Caco-2 (cell line): ENCODE measurements at regions of chr19 and their contacts with region 1.

Region 1: DNA sequence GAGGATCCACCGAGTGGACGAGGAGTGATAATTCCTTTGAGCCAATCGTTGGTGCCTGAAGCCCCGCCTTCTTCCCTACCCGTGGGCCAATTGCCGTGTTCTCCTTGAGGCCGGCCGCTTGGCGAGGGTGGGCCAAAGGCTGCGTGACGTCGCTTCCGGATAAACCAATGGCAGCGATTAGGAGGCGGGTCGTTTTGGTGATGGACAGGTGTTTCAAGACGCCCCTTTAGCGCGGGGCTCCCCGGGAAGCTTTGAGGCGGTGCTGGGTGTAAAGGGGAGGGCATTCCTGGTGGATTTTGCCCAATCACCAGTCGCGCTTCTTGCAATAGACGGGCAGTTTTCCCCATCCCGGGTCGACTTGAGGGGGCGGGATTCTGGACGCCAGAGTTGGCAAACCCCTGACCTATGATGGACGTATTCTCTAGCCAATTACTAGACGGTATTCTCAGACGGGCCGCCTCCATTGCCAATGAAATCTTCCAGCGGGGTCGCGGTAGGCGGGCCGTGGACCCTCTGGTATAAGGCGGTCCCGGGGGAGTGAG is 310 bp upstream of the PRMT1 start:
- DNase-seq: peak; percentile 100
- H3K4me3 ChIP-seq: peak overlapping the region; percentile 100
- H3K4me3 Mint-ChIP-seq: peak overlapping the region; percentile 78
- H3K27ac Mint-ChIP-seq: peak overlapping the region; percentile 99
- H3K4me1 ChIP-seq: peaks cover 22% of the 10 kb centered on the region
- H3K4me1 Mint-ChIP-seq: peaks cover 19% of the 10 kb centered on the region
- H3K27me3 ChIP-seq: no peaks in the 10 kb centered on the region
- H3K27me3 Mint-ChIP-seq: no peaks in the 10 kb centered on the region
- CTCF ChIP-seq: no peak

Region 2: GRCh38 chr19:49546825-49547565 is 129.8 kb before region 1 on chr19:
- CTCF ChIA-PET with region 1: interaction called, 7 read pairs
- POLR2A ChIA-PET with region 1: interaction called, 13 read pairs
- intact Hi-C with region 1: no loop called
- DNase-seq: peak; percentile 88 to 89
- H3K4me3 ChIP-seq: no peak overlapping the region
- H3K4me3 Mint-ChIP-seq: peak overlapping the region; percentile 54
- H3K27ac Mint-ChIP-seq: peak overlapping the region; percentile 44
- H3K4me1 ChIP-seq: peaks cover 3% of the 10 kb centered on the region; the same call in 1 of the 2 replicates
- H3K4me1 Mint-ChIP-seq: peaks cover 21% of the 10 kb centered on the region
- H3K27me3 ChIP-seq: no peaks in the 10 kb centered on the region
- H3K27me3 Mint-ChIP-seq: no peaks in the 10 kb centered on the region
- CTCF ChIP-seq: peak; percentile 84 to 86

Region 3: GRCh38 chr19:49590071-49590970 is 86.4 kb before region 1 on chr19:
- CTCF ChIA-PET with region 1: interaction called, 3 read pairs
- POLR2A ChIA-PET with region 1: interaction called, 3 read pairs
- intact Hi-C with region 1: loop called (anchors 1 kb)
- DNase-seq: peak; percentile 99
- H3K4me3 ChIP-seq: peak overlapping the region; percentile 99
- H3K4me3 Mint-ChIP-seq: peak overlapping the region; percentile 74
- H3K27ac Mint-ChIP-seq: peak overlapping the region; percentile 82
- H3K4me1 ChIP-seq: peaks cover 10% of the 10 kb centered on the region
- H3K4me1 Mint-ChIP-seq: peaks cover 29% of the 10 kb centered on the region
- H3K27me3 ChIP-seq: no peaks in the 10 kb centered on the region
- H3K27me3 Mint-ChIP-seq: no peaks in the 10 kb centered on the region
- CTCF ChIP-seq: no peak

Region 4: DNA sequence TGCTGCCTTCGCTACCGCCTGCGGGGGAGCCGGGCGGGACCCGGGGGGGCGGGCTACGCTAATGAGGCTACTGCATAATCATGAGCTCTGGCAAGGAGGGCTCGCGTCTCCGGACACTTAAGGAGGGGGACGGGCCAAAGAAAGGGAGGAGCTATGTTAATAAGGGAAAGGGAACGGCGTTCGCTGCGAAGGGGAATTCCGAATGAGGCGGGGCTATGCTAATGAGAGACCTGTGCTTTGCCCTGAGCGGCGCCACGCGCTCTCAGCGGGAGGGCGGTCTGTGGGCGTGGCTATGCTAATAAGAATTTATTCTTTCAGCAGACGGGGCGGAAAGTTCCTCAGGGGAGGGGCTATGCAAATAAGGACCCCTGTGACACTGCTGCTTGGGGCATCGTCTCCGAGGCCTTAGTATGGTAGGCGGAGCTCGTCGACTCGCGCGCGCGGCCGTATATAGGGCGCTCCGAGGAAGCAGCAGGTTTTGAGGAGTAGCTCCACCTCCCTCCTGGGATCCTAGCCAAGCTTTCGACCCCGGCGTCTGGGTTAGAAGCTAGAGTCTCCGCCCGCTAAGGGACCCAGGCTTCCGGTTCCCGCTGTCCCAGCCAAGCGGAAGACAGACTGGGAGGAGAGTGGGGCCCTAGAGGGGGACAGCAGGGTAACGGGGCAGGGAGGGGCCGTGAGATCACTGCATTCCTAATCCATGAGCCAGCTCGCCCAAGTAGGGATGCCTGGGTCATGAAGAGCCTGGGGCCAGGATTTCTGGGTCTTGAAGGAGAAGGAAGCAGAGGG is 36.5 kb before region 1 on chr19 and contains the start of gene RRAS:
- CTCF ChIA-PET with region 1: interaction called, 11 read pairs
- POLR2A ChIA-PET with region 1: interaction called, 50 read pairs
- intact Hi-C with region 1: loop called (anchors 1 kb)
- DNase-seq: peak; percentile 100
- H3K4me3 ChIP-seq: peak within 1 kb of the TSS; percentile 59
- H3K4me3 Mint-ChIP-seq: peak within 1 kb of the TSS; percentile 91
- H3K27ac Mint-ChIP-seq: peak within 1 kb of the TSS; percentile 100
- H3K4me1 ChIP-seq: peaks cover 7% of the 10 kb centered on the region
- H3K4me1 Mint-ChIP-seq: peaks cover 43% of the 10 kb centered on the region
- H3K27me3 ChIP-seq: no peaks in the 10 kb centered on the region
- H3K27me3 Mint-ChIP-seq: no peaks in the 10 kb centered on the region
- CTCF ChIP-seq: no peak
- total RNA-seq, gene RRAS: 10.6 and 11.3 TPM in 2 replicates

Region 5: GRCh38 chr19:49705919-49706318 is 29.2 kb after region 1 on chr19:
- CTCF ChIA-PET with region 1: no interaction called
- POLR2A ChIA-PET with region 1: no interaction called
- intact Hi-C with region 1: no loop called
- DNase-seq: no peak
- H3K4me3 ChIP-seq: no peak overlapping the region
- H3K4me3 Mint-ChIP-seq: no peak overlapping the region
- H3K27ac Mint-ChIP-seq: no peak overlapping the region
- H3K4me1 ChIP-seq: no peaks in the 10 kb centered on the region
- H3K4me1 Mint-ChIP-seq: peaks cover 6% of the 10 kb centered on the region
- H3K27me3 ChIP-seq: no peaks in the 10 kb centered on the region
- H3K27me3 Mint-ChIP-seq: peaks cover 3% of the 10 kb centered on the region
- CTCF ChIP-seq: no peak

Region 6: DNA sequence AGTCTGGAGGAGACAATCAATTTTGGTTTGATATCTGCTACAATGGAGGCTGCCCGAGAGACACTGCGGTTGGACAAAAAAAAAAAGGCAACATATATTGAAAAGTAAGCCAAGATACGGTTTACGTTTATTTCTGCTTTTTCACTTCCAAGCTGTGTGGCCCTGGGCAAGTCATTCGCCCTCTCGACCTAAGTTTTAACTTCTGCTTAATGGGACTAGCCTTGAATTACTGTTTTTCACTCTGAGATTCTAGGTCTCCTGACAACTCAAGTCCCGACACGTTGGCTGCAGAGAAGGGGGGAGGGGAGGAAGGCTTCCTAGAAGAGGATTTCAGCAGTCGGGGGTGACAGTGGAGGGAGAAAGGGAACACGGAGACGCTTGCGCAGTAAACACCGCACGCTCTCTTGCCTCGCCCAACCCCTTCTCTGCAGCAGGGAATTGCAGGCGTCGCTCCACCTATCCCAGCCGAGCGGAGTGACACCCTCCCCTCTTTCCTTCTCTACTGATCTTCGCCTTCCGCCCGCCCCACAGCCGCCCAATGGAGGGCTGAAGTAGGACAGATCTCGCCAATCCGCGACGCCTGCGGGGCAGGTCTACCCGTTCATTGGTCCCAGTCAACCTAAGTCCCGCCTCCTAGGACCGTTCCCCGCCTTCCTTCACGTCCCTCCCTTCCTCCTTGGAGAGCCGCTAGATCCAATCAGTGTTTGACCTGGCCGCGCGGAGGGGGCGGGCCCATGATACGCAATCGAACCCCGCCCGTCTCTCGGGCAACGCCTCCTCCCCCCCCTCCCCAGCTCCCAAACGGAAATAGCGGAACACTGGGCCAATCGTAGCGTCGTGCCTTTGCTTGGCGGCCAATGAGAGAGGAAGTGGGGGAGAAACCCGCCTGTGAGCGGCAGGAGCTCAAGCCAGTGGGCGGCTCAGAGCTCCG is 89.5 kb after region 1 on chr19:
- CTCF ChIA-PET with region 1: interaction called, 8 read pairs
- POLR2A ChIA-PET with region 1: interaction called, 13 read pairs
- intact Hi-C with region 1: loop called (anchors 5 kb)
- DNase-seq: peak; percentile 100
- H3K4me3 ChIP-seq: peak overlapping the region; percentile 44
- H3K4me3 Mint-ChIP-seq: peak overlapping the region; percentile 86
- H3K27ac Mint-ChIP-seq: peak overlapping the region; percentile 78
- H3K4me1 ChIP-seq: peaks cover 17% of the 10 kb centered on the region
- H3K4me1 Mint-ChIP-seq: peaks cover 24% of the 10 kb centered on the region
- H3K27me3 ChIP-seq: no peaks in the 10 kb centered on the region
- H3K27me3 Mint-ChIP-seq: no peaks in the 10 kb centered on the region
- CTCF ChIP-seq: no peak